ENCODE measurements at regions of chr15 and their contacts with region 1.

Region 1: DNA sequence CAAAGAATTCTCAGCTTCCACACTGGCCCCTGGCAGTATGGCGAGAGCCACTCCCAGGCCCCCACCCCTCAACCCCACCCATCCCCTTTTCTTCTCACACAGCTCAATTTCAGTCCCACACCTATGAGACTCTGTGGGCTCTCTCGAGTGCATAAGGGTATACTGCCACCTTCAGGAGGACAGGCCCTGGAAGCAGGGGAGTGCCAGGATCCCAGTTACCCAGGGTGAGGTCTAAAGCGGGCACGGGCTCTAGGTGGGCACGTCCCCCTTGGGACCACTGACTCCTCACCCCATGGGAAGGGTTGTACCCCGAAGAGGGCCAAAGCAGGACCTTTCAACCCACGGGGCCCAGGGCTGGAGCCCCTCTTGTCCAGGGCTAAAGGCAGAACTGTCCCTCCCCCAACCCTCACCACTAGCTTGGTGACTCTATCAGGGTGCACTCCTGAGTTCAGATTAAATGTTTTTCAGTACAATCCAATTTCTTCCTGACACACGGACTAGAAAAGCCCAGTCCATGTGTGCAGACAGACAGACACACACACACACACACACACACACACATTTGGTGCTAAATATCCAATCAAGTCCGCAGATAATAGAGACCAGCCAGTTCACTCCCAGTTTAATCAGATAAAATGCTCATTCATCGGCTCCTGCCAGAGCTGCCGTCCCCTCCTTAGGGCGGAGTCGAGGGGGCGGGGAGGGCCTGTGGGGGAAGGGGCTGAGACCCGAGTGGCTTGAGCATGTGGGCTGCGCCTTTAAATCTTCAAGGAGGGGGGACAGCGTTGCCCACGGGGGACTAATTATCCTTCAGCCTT is 59.4 kb downstream of the CYP11A1 start:
- DNase-seq: peak; percentile 41 to 66
- ATAC-seq: peak; percentile 76 to 87 (median 82)
- H3K4me3 ChIP-seq: no peak overlapping the region
- H3K27ac ChIP-seq: no peak overlapping the region
- H3K4me1 ChIP-seq: peaks cover 0 to 8% (median 0%) of the 10 kb centered on the region in 9 donors
- H3K27me3 ChIP-seq: peaks cover 0 to 55% (median 32%) of the 10 kb centered on the region in 7 donors
- CTCF ChIP-seq: peak; percentile 45 to 79 (median 75)

Region 2: DNA sequence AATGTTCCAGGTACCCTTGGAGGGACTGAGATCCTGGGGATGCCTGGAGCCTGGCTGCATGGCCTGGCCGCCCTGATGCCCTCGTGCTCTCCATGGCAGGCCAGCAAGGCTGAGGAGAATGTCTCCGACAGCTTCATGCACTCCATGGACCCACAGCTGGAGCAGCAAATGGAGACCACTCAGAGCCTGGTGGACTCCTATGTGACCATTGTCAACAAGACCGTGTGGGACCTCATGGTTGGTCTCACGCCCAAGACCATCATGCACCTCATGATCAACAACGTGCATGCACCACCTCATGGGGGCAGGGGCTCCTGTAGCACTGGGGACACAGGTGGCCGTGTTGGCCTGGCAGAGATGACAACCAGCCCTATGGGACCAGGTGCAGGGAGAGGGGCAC is 245.4 kb before region 1 on chr15:
- intact Hi-C with region 1: loop called in 1 of 10 experiments (anchors 5 kb)
- DNase-seq: no peak
- ATAC-seq: no peak
- H3K4me3 ChIP-seq: no peak overlapping the region
- H3K27ac ChIP-seq: no peak overlapping the region
- H3K4me1 ChIP-seq: no peaks in the 10 kb centered on the region
- H3K27me3 ChIP-seq: no peaks in the 10 kb centered on the region
- CTCF ChIP-seq: no peak

Region 3: DNA sequence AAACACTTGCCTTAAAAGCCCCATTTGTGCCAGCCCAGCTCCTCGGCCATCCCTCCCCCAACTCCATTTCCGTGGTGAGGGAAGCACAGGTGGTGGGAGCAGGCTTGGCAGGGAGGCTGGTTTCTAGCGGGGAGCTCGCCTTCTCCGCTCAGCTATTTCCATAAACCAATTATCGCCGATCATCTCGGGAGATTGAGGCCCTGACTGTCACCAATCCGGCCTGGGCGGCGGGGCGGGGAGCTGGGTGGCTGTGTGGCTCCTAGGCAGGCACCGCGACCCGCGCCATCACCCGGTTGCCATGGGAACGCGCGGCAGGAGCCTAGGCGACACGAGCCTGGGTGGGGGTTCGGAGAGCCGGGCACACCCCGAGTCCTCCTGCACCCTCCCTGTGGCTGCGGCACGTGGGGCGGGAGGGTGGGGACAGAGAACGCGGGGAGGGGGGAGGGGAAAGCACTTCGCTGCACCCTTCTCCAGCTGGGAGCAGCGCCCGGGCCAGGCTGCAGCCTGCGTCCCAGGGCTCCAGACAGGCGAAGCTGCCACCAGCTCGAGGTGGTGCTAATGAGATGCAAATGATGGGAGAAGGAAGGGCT is 62.6 kb before region 1 on chr15:
- intact Hi-C with region 1: loop called in 1 of 10 experiments (anchors 2 kb)
- DNase-seq: peak in 1 of 2 donors; percentile 22
- ATAC-seq: peak in 6 of 8 donors; percentile 5 to 47 (median 29)
- H3K4me3 ChIP-seq: no peak overlapping the region
- H3K27ac ChIP-seq: no peak overlapping the region
- H3K4me1 ChIP-seq: peaks cover 12 to 44% (median 31%) of the 10 kb centered on the region in 9 donors
- H3K27me3 ChIP-seq: peaks cover 0 to 22% (median 11%) of the 10 kb centered on the region in 7 donors
- CTCF ChIP-seq: no peak